AG04449 (cell line): ENCODE measurements at regions of chr18 and their contacts with region 1.

Region 1: GRCh38 chr18:36572135-36572856 is 256.5 kb downstream of the TPGS2 start:
- DNase-seq: no peak
- H3K4me3 ChIP-seq: no peak overlapping the region
- CTCF ChIP-seq: peak; percentile 56

Region 2: DNA sequence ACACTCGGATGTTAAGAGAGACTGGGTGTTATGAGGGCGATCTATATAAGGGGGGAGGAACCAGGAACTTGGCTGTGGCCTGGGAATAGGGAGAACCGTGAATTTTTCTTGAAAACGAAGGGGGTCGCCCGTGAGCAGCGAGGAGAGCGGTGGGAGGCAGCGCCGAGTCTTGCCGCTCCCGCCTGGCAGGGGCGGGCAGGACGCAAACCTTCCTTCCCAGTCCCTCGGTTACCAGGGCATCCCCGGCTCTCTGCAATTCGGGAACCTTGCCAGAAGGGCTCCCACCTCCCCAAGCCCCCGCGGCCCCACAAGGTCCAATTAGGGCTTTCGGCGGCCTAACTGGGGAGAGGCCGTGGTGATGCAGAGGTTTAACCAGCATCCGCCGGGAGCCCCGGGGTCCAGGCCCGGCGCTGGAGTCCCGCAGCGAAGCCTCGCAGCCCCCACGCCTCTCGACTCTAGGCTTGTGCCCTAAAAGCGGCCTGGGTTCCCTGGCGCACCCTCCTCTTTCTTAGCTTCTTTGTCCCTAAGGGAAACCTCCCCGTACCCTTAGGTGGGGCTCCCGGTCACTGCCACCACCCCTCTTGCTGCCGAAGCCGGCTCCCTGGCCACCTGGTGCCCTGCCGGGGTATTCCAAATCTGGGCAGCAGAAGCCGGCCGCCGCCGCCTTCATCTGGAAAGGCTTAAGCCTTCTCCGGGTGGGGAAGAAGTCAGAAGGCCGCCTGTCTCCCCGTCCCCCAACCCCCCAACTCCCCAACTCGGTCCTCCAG is 275.5 kb before region 1 on chr18:
- CTCF ChIA-PET with region 1: interaction called, 34 read pairs
- POLR2A ChIA-PET with region 1: no interaction called
- DNase-seq: no peak
- H3K4me3 ChIP-seq: peak overlapping the region; percentile 62
- CTCF ChIP-seq: peak; percentile 80

Region 3: GRCh38 chr18:36561046-36561445 is 11.2 kb before region 1 on chr18:
- CTCF ChIA-PET with region 1: interaction called, 33 read pairs
- POLR2A ChIA-PET with region 1: no interaction called
- DNase-seq: no peak
- H3K4me3 ChIP-seq: no peak overlapping the region
- CTCF ChIP-seq: no peak